ENCODE measurements at regions of chrX and their contacts with region 1.

Region 1: GRCh38 chrX:103343105-103343504 is 13.1 kb downstream of the TCEAL7 start:
- DNase-seq: no peak
- ATAC-seq: no peak
- H3K4me3 Mint-ChIP-seq: no peak overlapping the region
- H3K27ac Mint-ChIP-seq: no peak overlapping the region
- H3K4me1 Mint-ChIP-seq: no peaks in the 10 kb centered on the region
- H3K27me3 Mint-ChIP-seq: peaks cover 5% of the 10 kb centered on the region
- CTCF ChIP-seq: peak; percentile 14

Region 2: GRCh38 chrX:103464774-103465117 is 121.6 kb after region 1 on chrX:
- CTCF ChIA-PET with region 1: no interaction called
- POLR2A ChIA-PET with region 1: no interaction called
- intact Hi-C with region 1: loop called (anchors 1 kb)
- DNase-seq: peak; percentile 26
- ATAC-seq: peak; percentile 87
- H3K4me3 Mint-ChIP-seq: peak overlapping the region; percentile 79
- H3K27ac Mint-ChIP-seq: no peak overlapping the region
- H3K4me1 Mint-ChIP-seq: peaks cover 10% of the 10 kb centered on the region
- H3K27me3 Mint-ChIP-seq: no peaks in the 10 kb centered on the region
- CTCF ChIP-seq: no peak

Region 3: DNA sequence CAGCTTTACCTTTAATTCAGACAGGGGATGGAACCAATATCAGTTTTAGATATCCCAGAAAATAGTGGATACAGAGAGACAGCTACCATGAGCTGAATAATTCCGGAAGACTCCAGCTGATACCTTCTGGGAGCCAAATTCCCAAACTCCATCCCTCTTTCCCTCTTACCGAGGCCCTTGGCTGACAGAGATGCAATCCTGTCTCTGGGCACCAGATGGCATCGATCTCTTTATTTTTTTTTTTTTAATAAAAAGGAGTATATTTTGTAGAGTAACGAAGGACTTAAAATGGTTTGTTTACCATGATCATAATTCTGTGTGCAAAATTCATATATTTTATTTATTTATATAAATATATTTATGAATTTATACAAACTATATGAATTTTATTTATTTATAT is 145.2 kb after region 1 on chrX:
- CTCF ChIA-PET with region 1: no interaction called
- POLR2A ChIA-PET with region 1: no interaction called
- intact Hi-C with region 1: loop called (anchors 1 kb)
- DNase-seq: no peak
- ATAC-seq: no peak
- H3K4me3 Mint-ChIP-seq: no peak overlapping the region
- H3K27ac Mint-ChIP-seq: no peak overlapping the region
- H3K4me1 Mint-ChIP-seq: no peaks in the 10 kb centered on the region
- H3K27me3 Mint-ChIP-seq: no peaks in the 10 kb centered on the region
- CTCF ChIP-seq: no peak